ENCODE measurements at regions of chr19 and their contacts with region 1.

Region 1: DNA sequence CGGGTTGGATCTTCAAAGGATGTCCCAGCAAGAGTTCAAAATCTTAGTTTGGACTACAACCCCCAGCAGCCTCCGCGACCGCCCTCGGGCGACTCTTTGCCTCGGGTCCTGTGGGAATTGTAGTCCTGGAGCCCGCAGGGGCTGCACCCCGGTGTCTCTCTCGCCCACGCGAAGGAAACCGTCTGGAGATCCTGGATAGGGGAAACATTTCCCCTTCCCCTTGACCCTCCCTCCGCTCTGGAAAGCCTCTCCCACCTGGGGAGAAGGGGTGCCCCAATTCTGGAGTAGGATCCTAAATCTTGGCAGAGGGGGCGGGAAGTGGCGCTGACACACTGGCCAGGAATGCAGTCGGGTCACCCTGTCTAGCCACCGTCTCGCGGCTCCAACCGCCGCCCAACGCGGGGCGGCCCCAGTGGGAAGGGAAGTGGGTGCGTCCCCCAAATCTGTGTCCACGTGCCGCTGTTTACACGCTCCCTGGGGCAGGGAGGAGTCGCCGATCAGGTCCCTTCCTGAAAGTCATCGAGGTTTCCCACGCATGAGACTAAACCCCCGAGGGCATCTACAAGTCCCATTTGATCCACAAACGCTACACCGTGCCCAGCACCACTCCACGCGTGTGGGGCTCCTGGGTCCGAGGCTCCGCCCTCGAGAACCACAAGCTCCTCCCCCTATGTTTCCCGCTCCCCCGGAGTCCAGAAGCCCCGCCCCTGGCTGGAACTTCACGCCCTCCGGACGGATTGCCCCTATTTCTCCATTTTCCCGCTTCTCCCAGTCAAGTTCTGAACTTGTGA is 761 bp upstream of the PPP1R13L start:
- DNase-seq: peak; percentile 68 to 90 (median 80)
- ATAC-seq: peak; percentile 71
- H3K4me3 ChIP-seq: peak overlapping the region; percentile 67
- H3K4me3 Mint-ChIP-seq: peak overlapping the region; percentile 97
- H3K27ac ChIP-seq: peak overlapping the region; percentile 70 to 86
- H3K27ac Mint-ChIP-seq: peak overlapping the region; percentile 79
- H3K4me1 ChIP-seq: peaks cover 45% of the 10 kb centered on the region
- H3K4me1 Mint-ChIP-seq: peaks cover 40% of the 10 kb centered on the region
- H3K27me3 ChIP-seq: peaks cover 27% of the 10 kb centered on the region in 2 experiments
- H3K27me3 Mint-ChIP-seq: peaks cover 44% of the 10 kb centered on the region
- CTCF ChIP-seq: no peak

Region 2: GRCh38 chr19:45250832-45251451 is 154.7 kb before region 1 on chr19 and contains the start of gene MARK4:
- CTCF ChIA-PET with region 1: no interaction called
- POLR2A ChIA-PET with region 1: no interaction called
- intact Hi-C with region 1: loop called in 1 of 2 experiments (anchors 10 kb)
- DNase-seq: peak; percentile 32 to 84 (median 52)
- ATAC-seq: peak; percentile 71
- H3K4me3 ChIP-seq: peak within 1 kb of the TSS; percentile 83
- H3K4me3 Mint-ChIP-seq: peak within 1 kb of the TSS; percentile 90
- H3K27ac ChIP-seq: no peak within 1 kb of the TSS
- H3K27ac Mint-ChIP-seq: peak within 1 kb of the TSS; percentile 72
- H3K4me1 ChIP-seq: peaks cover 56% of the 10 kb centered on the region
- H3K4me1 Mint-ChIP-seq: peaks cover 35% of the 10 kb centered on the region
- H3K27me3 ChIP-seq: no peaks in the 10 kb centered on the region
- H3K27me3 Mint-ChIP-seq: no peaks in the 10 kb centered on the region
- CTCF ChIP-seq: no peak
- total RNA-seq, gene MARK4: 18.1 to 19.8 TPM

Region 3: GRCh38 chr19:45352914-45353796 is 52.5 kb before region 1 on chr19:
- CTCF ChIA-PET with region 1: no interaction called
- POLR2A ChIA-PET with region 1: no interaction called
- intact Hi-C with region 1: no loop called
- DNase-seq: peak in 1 of 14 experiments; percentile 13
- ATAC-seq: no peak
- H3K4me3 ChIP-seq: no peak overlapping the region
- H3K4me3 Mint-ChIP-seq: no peak overlapping the region
- H3K27ac ChIP-seq: no peak overlapping the region
- H3K27ac Mint-ChIP-seq: no peak overlapping the region
- H3K4me1 ChIP-seq: no peaks in the 10 kb centered on the region
- H3K4me1 Mint-ChIP-seq: no peaks in the 10 kb centered on the region
- H3K27me3 ChIP-seq: no peaks in the 10 kb centered on the region
- H3K27me3 Mint-ChIP-seq: no peaks in the 10 kb centered on the region
- CTCF ChIP-seq: no peak

Region 4: DNA sequence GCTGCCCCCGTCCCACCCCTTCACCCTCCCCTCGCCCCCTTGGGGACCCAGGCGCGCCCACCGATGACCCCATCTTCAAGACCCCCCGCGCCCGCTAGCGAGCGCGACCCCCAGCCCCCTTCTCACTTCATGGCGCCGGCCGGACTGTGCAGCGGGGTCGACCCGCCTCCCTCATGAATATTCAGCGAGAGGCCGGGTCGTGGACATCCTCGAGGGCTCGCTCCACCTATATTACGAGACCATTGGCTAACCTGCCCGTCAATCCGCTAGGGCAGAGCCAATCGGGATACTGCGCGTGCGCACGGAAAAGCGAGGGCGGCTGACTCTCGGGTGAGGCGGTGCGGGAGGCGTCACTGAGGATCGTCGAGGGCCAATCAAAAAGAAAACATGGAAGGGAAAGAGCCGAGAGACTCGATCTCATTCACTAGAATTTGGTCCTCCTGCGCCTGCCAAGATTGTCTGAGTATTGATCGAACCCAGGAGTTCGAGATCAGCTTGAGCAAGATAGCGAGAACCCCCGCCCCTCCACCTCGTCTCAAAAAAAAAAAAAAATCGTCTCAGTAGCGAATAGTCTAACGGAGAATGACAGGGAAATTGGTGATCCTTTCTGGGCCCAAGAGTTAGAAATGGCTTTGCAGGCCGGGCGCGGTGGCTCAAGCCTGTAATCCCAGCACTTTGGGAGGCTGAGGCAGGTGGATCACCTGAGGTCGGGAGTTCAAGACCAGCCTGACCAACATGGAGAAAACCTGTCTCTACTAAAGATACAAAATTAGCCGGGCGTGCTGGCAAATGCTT is 35.0 kb before region 1 on chr19 and contains the start of gene ERCC2:
- CTCF ChIA-PET with region 1: interaction called, 3 read pairs
- POLR2A ChIA-PET with region 1: no interaction called
- intact Hi-C with region 1: loop called (anchors 2 kb)
- DNase-seq: peak; percentile 99 to 100 (median 99)
- ATAC-seq: peak; percentile 99
- H3K4me3 ChIP-seq: peak within 1 kb of the TSS; percentile 92
- H3K4me3 Mint-ChIP-seq: peak within 1 kb of the TSS; percentile 88
- H3K27ac ChIP-seq: peak within 1 kb of the TSS in 1 of 2 donors; percentile 78
- H3K27ac Mint-ChIP-seq: peak within 1 kb of the TSS; percentile 88
- H3K4me1 ChIP-seq: peaks cover 26% of the 10 kb centered on the region
- H3K4me1 Mint-ChIP-seq: peaks cover 7% of the 10 kb centered on the region
- H3K27me3 ChIP-seq: no peaks in the 10 kb centered on the region
- H3K27me3 Mint-ChIP-seq: no peaks in the 10 kb centered on the region
- CTCF ChIP-seq: no peak
- total RNA-seq, gene ERCC2: 8.7 to 9.6 TPM

Region 5: GRCh38 chr19:45423589-45424190 is 18.1 kb after region 1 on chr19 and contains the start of gene ERCC1:
- CTCF ChIA-PET with region 1: interaction called, 3 read pairs
- POLR2A ChIA-PET with region 1: interaction called, 3 read pairs
- intact Hi-C with region 1: loop called in 1 of 2 experiments (anchors 2 kb)
- DNase-seq: peak in 7 of 14 experiments; percentile 36 to 87 (median 48)
- ATAC-seq: peak; percentile 58
- H3K4me3 ChIP-seq: peak within 1 kb of the TSS; percentile 90
- H3K4me3 Mint-ChIP-seq: peak within 1 kb of the TSS; percentile 92
- H3K27ac ChIP-seq: peak within 1 kb of the TSS; percentile 54 to 75
- H3K27ac Mint-ChIP-seq: peak within 1 kb of the TSS; percentile 80
- H3K4me1 ChIP-seq: peaks cover 53% of the 10 kb centered on the region
- H3K4me1 Mint-ChIP-seq: peaks cover 48% of the 10 kb centered on the region
- H3K27me3 ChIP-seq: peaks cover 4 to 5% of the 10 kb centered on the region in 2 experiments
- H3K27me3 Mint-ChIP-seq: peaks cover 9% of the 10 kb centered on the region
- CTCF ChIP-seq: no peak
- total RNA-seq, gene ERCC1: 32.5 to 32.6 TPM

Region 6: DNA sequence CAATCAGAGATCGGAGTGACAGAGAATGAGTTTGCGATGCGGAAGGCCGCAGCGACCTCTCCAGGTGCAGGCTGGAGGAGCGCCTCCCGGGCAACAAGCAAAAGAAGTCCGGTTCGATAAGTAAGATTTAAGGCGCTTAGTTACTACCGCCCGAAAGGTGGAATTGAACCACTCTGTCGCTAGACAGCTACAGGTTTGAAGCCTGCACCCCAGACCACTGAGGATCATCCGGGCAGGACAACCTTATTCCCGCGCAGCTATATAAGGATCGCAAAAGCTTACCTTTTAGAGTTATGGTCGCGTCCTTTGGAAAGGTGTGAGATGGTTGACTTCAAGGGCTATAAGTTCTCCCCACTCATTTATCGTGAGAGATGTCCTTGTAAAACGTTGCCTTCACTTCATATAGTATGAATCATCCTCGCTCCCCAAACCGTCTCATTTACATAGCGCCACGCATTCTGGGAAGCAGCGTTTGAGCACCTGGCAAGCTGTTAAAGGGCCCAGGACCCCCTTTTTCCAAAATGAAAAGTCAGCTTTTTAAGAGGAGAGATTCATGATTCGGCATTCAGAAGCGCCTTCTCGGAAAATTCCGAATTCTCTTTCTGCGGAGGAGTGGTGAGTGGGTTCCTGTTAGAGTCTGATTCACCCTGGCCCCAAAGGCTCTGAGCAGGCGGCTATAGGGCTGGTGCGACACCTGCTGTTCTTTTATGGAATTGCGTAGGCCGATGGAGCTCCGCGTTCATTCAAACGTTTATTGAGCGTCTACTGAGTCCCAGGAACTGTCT is 73.0 kb after region 1 on chr19:
- CTCF ChIA-PET with region 1: interaction called, 15 read pairs
- POLR2A ChIA-PET with region 1: interaction called, 6 read pairs
- intact Hi-C with region 1: loop called in 1 of 2 experiments (anchors 2 kb)
- DNase-seq: peak; percentile 79 to 95 (median 86)
- ATAC-seq: peak; percentile 74
- H3K4me3 ChIP-seq: peak overlapping the region; percentile 64
- H3K4me3 Mint-ChIP-seq: peak overlapping the region; percentile 86
- H3K27ac ChIP-seq: peak overlapping the region; percentile 98 to 99
- H3K27ac Mint-ChIP-seq: peak overlapping the region; percentile 99
- H3K4me1 ChIP-seq: peaks cover 37% of the 10 kb centered on the region
- H3K4me1 Mint-ChIP-seq: peaks cover 29% of the 10 kb centered on the region
- H3K27me3 ChIP-seq: peaks cover 0 to under 1% of the 10 kb centered on the region in 2 experiments
- H3K27me3 Mint-ChIP-seq: peaks cover 21% of the 10 kb centered on the region
- CTCF ChIP-seq: peak; percentile 85

Region 7: GRCh38 chr19:45485305-45486077 is 79.9 kb after region 1 on chr19:
- CTCF ChIA-PET with region 1: interaction called, 22 read pairs
- POLR2A ChIA-PET with region 1: interaction called, 3 read pairs
- intact Hi-C with region 1: no loop called
- DNase-seq: peak; percentile 95 to 98 (median 97)
- ATAC-seq: peak; percentile 99
- H3K4me3 ChIP-seq: peak overlapping the region; percentile 69
- H3K4me3 Mint-ChIP-seq: peak overlapping the region; percentile 98
- H3K27ac ChIP-seq: no peak overlapping the region
- H3K27ac Mint-ChIP-seq: peak overlapping the region; percentile 47
- H3K4me1 ChIP-seq: peaks cover 14% of the 10 kb centered on the region
- H3K4me1 Mint-ChIP-seq: peaks cover 6% of the 10 kb centered on the region
- H3K27me3 ChIP-seq: no peaks in the 10 kb centered on the region
- H3K27me3 Mint-ChIP-seq: peaks cover 7% of the 10 kb centered on the region
- CTCF ChIP-seq: peak; percentile 86

Region 8: GRCh38 chr19:45577111-45577905 is 171.7 kb after region 1 on chr19:
- CTCF ChIA-PET with region 1: no interaction called
- POLR2A ChIA-PET with region 1: no interaction called
- intact Hi-C with region 1: no loop called
- DNase-seq: no peak
- ATAC-seq: no peak
- H3K4me3 ChIP-seq: no peak overlapping the region
- H3K4me3 Mint-ChIP-seq: no peak overlapping the region
- H3K27ac ChIP-seq: no peak overlapping the region
- H3K27ac Mint-ChIP-seq: no peak overlapping the region
- H3K4me1 ChIP-seq: no peaks in the 10 kb centered on the region
- H3K4me1 Mint-ChIP-seq: peaks cover 11% of the 10 kb centered on the region
- H3K27me3 ChIP-seq: no peaks in the 10 kb centered on the region
- H3K27me3 Mint-ChIP-seq: no peaks in the 10 kb centered on the region
- CTCF ChIP-seq: no peak

Region 9: DNA sequence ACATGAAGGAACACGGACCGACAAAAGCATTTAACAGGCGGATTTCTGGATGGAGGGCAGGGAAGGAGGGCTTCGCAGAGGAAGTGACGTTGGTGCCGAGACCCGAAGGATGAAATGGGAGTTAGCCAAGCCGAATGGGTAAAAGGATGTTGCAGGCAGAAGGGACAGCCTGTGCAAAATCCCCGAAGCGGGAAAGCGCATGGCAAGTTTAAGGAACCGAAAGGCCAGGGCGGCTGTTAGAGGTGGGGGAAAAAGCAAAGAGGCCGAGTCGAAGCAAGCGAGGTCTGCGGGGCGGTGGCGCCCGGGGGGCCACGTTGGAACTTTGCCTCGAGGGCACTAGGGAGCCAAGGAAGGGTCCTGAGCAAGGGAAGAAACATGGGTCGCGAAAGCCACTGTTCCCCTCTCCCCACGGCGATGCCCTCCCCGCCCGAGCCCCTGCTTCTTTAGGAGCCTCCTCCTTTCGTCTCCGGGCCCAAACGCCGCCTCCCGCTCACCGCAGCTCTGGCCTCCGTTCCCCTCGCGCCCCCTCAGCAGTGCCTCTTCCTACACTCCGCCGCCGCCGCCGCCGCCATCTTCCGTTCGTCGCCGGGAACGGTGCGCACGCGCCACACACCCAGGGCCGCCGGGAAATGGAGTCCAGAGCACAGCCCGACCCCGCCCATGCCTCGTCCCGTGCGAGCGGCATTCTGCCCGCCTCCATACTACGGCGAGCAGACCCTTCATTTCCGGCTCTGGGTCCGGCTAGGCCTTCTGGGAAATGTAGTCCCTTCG is 457.1 kb after region 1 on chr19 and contains the start of gene SYMPK:
- CTCF ChIA-PET with region 1: no interaction called
- POLR2A ChIA-PET with region 1: no interaction called
- intact Hi-C with region 1: loop called in 1 of 2 experiments (anchors 10 kb)
- DNase-seq: peak; percentile 96 to 99 (median 98)
- ATAC-seq: peak; percentile 97
- H3K4me3 ChIP-seq: peak within 1 kb of the TSS; percentile 80
- H3K4me3 Mint-ChIP-seq: peak within 1 kb of the TSS; percentile 99
- H3K27ac ChIP-seq: peak within 1 kb of the TSS; percentile 66 to 86
- H3K27ac Mint-ChIP-seq: peak within 1 kb of the TSS; percentile 83
- H3K4me1 ChIP-seq: peaks cover 29% of the 10 kb centered on the region
- H3K4me1 Mint-ChIP-seq: peaks cover 34% of the 10 kb centered on the region
- H3K27me3 ChIP-seq: peaks cover 9 to 13% of the 10 kb centered on the region in 2 experiments
- H3K27me3 Mint-ChIP-seq: peaks cover 29% of the 10 kb centered on the region
- CTCF ChIP-seq: no peak
- total RNA-seq, gene SYMPK: 63.3 to 65.0 TPM

Measured in CD4-positive, alpha-beta T cell (primary cell).